A673 (cell line): ENCODE measurements at regions of chr12 and their contacts with region 1.

Region 1: DNA sequence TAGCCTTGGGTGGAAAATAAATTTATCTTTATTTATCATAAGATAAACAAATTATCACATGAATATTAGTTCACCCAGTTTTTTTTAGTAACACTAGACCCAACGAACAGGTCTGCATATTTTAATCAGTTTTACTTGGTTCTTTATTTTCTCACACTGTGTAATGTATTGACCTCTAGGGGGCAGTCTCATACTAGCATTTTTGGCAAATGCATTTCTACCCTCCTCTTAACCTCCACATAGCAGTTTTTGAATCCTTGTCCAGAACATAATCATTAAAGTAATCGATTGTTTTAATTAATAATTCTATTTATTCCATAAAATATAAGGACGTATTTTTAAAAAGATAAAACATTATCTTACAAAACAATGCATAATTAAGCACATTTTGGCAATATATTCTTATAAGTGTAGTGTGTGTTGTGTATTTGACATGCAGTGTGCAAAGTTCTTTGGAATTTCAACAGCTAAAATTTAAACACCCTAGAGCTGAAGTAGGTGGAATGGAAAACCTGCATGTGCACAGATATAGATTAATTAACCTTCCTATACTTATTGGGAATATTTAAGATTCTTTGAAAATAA is 31.6 kb upstream of the PTPRQ start:
- DNase-seq: peak; percentile 81
- H3K4me3 ChIP-seq: no peak overlapping the region
- H3K27ac ChIP-seq: no peak overlapping the region
- H3K4me1 ChIP-seq: peaks cover 4% of the 10 kb centered on the region
- H3K27me3 ChIP-seq: no peaks in the 10 kb centered on the region
- CTCF ChIP-seq: peak; percentile 79

Region 2: GRCh38 chr12:80504369-80505163 is 92.1 kb after region 1 on chr12:
- CTCF ChIA-PET with region 1: no interaction called
- POLR2A ChIA-PET with region 1: no interaction called
- intact Hi-C with region 1: no loop called
- DNase-seq: peak; percentile 3
- H3K4me3 ChIP-seq: no peak overlapping the region
- H3K27ac ChIP-seq: no peak overlapping the region
- H3K4me1 ChIP-seq: peaks cover 1% of the 10 kb centered on the region
- H3K27me3 ChIP-seq: no peaks in the 10 kb centered on the region
- CTCF ChIP-seq: no peak

Region 3: GRCh38 chr12:80598004-80598606 is 185.6 kb after region 1 on chr12:
- CTCF ChIA-PET with region 1: no interaction called
- POLR2A ChIA-PET with region 1: no interaction called
- intact Hi-C with region 1: loop called (anchors 5 kb)
- DNase-seq: peak; percentile 78
- H3K4me3 ChIP-seq: no peak overlapping the region
- H3K27ac ChIP-seq: peak overlapping the region; percentile 69
- H3K4me1 ChIP-seq: peaks cover 81% of the 10 kb centered on the region
- H3K27me3 ChIP-seq: no peaks in the 10 kb centered on the region
- CTCF ChIP-seq: peak; percentile 72

Region 4: GRCh38 chr12:80763874-80764273 is 351.4 kb after region 1 on chr12:
- CTCF ChIA-PET with region 1: no interaction called
- POLR2A ChIA-PET with region 1: no interaction called
- intact Hi-C with region 1: loop called (anchors 1 kb)
- DNase-seq: peak; percentile 74
- H3K4me3 ChIP-seq: no peak overlapping the region
- H3K27ac ChIP-seq: no peak overlapping the region
- H3K4me1 ChIP-seq: peaks cover 7% of the 10 kb centered on the region
- H3K27me3 ChIP-seq: no peaks in the 10 kb centered on the region
- CTCF ChIP-seq: peak; percentile 77

Region 5: DNA sequence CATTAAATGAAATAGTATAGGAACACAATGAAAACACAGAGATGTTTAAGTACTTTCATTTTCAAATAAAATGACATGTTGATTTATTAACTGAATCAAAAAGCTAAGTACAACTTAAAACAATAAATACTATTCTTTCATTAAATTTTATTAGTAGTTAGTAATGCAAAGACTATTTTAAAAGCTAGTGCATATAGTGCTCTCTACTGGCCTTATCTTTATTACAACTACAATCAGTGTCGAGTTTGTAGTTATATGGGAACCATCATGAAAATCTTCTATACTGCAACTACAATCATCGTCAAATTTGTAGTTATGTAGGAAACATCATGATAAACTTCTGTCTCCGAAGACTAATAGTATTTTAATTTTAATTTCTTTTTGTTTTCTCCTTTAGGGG is 534.1 kb after region 1 on chr12:
- CTCF ChIA-PET with region 1: no interaction called
- POLR2A ChIA-PET with region 1: no interaction called
- intact Hi-C with region 1: loop called (anchors 5 kb)
- DNase-seq: peak; percentile 38
- H3K4me3 ChIP-seq: no peak overlapping the region
- H3K27ac ChIP-seq: no peak overlapping the region
- H3K4me1 ChIP-seq: peaks cover 7% of the 10 kb centered on the region
- H3K27me3 ChIP-seq: no peaks in the 10 kb centered on the region
- CTCF ChIP-seq: peak; percentile 55